ENCODE measurements at regions of chr16 and their contacts with region 1.

Region 1: GRCh38 chr16:1054660-1055556 is 17.6 kb upstream of the SSTR5 start:
- DNase-seq: peak; percentile 85
- H3K4me3 Mint-ChIP-seq: no peak overlapping the region
- H3K27ac Mint-ChIP-seq: no peak overlapping the region
- H3K4me1 Mint-ChIP-seq: no peaks in the 10 kb centered on the region
- H3K27me3 Mint-ChIP-seq: peaks cover 79% of the 10 kb centered on the region
- CTCF ChIP-seq: peak; percentile 97

Region 2: GRCh38 chr16:814974-815373 is 239.9 kb before region 1 on chr16:
- CTCF ChIA-PET with region 1: interaction called, 3 read pairs
- intact Hi-C with region 1: loop called (anchors 2 kb)
- DNase-seq: no peak
- H3K4me3 Mint-ChIP-seq: no peak overlapping the region
- H3K27ac Mint-ChIP-seq: no peak overlapping the region
- H3K4me1 Mint-ChIP-seq: no peaks in the 10 kb centered on the region
- H3K27me3 Mint-ChIP-seq: peaks cover 39% of the 10 kb centered on the region
- CTCF ChIP-seq: no peak